Activated T-helper 1 cell treated with anti-CD3 and anti-CD28 coated beads, Interleukin-12 subunit alpha, Interleukin-12 subunit beta, Interleukin-2, Interleukin-4 antibody, amounts not matched to agents 30 ng/mL and 10 ng/mL and 1 ng/mL, durations not matched to agents 14 hours and 24 hours and 36 hours (primary cell): ENCODE measurements at regions of chr19 and their contacts with region 1.

Region 1: GRCh38 chr19:38899447-38900219 is at the starts of genes NFKBIB and SIRT2:
- DNase-seq: peak; percentile 100
- H3K4me3 Mint-ChIP-seq: peak within 1 kb of the TSS; percentile 93
- H3K27ac Mint-ChIP-seq: peak within 1 kb of the TSS; percentile 94
- H3K4me1 Mint-ChIP-seq: peaks cover 42% of the 10 kb centered on the region
- H3K27me3 Mint-ChIP-seq: no peaks in the 10 kb centered on the region
- total RNA-seq, gene NFKBIB: 98.1 and 102 TPM in 2 replicates
- total RNA-seq, gene SIRT2: 28.3 and 28.7 TPM in 2 replicates

Region 2: GRCh38 chr19:38877781-38878574 is 21.7 kb before region 1 on chr19 and contains the start of gene RINL:
- intact Hi-C with region 1: loop called (anchors 1 kb)
- DNase-seq: peak; percentile 58
- H3K4me3 Mint-ChIP-seq: peak within 1 kb of the TSS; percentile 95
- H3K27ac Mint-ChIP-seq: peak within 1 kb of the TSS; percentile 96
- H3K4me1 Mint-ChIP-seq: peaks cover 32% of the 10 kb centered on the region
- H3K27me3 Mint-ChIP-seq: no peaks in the 10 kb centered on the region
- total RNA-seq, gene RINL: 70.7 and 73.1 TPM in 2 replicates

Region 3: GRCh38 chr19:38949580-38950367 is 50.1 kb after region 1 on chr19:
- intact Hi-C with region 1: loop called (anchors 1 kb)
- DNase-seq: peak; percentile 79
- H3K4me3 Mint-ChIP-seq: peak overlapping the region; percentile 59
- H3K27ac Mint-ChIP-seq: no peak overlapping the region
- H3K4me1 Mint-ChIP-seq: peaks cover 15% of the 10 kb centered on the region
- H3K27me3 Mint-ChIP-seq: peaks cover 21% of the 10 kb centered on the region